ENCODE measurements at regions of chr3 and their contacts with region 1.

Region 1: DNA sequence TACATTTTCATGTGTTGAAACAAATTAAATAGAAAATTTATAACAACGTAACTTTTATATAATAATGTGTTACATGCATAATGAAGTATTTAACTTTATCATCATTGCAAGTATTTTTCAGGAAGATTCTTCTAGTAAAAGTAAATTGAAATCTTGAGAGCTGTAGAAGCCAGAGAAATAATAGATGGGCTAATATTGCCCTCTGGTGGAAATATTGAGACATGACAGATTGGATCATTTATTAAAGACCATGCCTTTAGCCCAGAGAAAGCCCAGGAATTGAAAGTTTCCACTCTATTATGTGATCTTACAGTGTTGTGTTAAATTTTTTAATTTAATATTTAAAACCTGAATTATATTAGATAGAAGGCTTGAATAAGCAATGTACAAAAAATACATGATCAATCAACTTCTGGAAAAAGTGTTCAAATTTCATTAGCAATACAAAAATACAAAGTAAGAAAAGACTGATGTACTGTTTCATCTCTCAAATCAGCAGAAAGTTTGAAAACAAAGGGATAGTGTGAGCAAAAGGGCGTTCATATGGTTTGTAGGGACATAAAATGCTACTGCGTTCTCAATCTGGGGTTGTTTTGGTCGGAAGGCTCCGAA is 52.7 kb upstream of the SPTSSB start:
- DNase-seq: peak; percentile 64
- H3K4me3 ChIP-seq: no peak overlapping the region
- H3K27ac ChIP-seq: no peak overlapping the region
- H3K4me1 ChIP-seq: no peaks in the 10 kb centered on the region
- H3K27me3 ChIP-seq: no peaks in the 10 kb centered on the region
- CTCF ChIP-seq: peak; percentile 72

Region 2: DNA sequence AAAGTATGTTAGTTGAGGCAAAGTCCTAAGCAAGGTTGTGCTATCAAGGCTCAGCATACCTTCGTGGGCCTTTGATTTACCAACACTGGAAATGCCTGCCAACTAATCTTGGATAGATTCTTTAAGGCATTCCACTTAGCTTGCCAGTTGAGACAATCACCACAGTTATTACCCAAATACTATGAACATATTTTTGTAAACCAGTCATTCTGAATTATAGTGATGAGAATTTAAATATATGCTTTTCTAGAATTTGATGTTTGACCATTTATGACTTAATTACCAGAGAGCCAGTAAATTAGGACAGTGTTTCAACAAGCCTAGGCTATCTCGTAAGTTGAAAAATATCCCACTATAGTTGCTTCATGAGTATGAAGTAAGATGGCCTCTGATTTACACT is 989.9 kb before region 1 on chr3:
- CTCF ChIA-PET with region 1: no interaction called
- POLR2A ChIA-PET with region 1: no interaction called
- intact Hi-C with region 1: loop called (anchors 10 kb)
- DNase-seq: no peak
- H3K4me3 ChIP-seq: no peak overlapping the region
- H3K27ac ChIP-seq: no peak overlapping the region
- H3K4me1 ChIP-seq: no peaks in the 10 kb centered on the region
- H3K27me3 ChIP-seq: no peaks in the 10 kb centered on the region
- CTCF ChIP-seq: no peak

Region 3: DNA sequence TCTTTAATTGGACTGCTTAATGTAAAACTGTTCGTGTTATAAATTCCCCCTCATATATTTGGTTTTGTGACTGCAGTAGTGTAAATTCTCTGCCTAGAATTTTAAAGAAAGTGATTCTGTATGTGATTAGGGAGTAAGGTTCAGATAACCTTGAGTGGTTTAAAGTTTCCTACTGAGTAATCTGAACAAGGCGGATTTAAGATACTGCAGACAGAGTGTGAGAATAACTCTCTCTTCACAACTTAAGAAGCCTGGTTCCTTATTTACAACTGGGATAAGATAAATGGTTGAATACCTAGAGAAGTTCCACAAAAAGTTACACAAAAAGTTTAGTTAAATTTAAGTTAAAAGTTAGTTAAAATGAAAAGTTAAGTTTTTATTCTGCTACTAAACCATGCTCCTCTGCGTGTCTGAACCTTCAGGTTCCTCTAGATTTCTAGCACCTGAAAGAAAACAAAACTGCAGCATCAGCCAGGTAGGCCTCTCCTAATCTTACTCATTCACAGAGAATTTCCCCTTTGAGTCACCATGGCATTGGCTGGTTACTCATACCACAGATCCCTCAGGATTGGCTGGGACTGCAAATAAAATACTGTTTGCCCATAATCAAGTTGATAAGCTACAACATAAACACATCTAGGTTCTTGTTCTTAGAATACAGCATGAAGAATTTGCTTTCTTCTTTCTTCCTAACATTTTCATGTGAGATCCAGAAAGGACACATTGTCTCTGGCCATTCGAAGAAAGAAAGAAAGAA is 747.3 kb before region 1 on chr3 and contains the start of gene ARL14:
- CTCF ChIA-PET with region 1: no interaction called
- POLR2A ChIA-PET with region 1: no interaction called
- intact Hi-C with region 1: loop called (anchors 10 kb)
- DNase-seq: no peak
- H3K4me3 ChIP-seq: no peak within 1 kb of the TSS
- H3K27ac ChIP-seq: no peak within 1 kb of the TSS
- H3K4me1 ChIP-seq: peaks cover 8% of the 10 kb centered on the region
- H3K27me3 ChIP-seq: no peaks in the 10 kb centered on the region
- CTCF ChIP-seq: no peak
- total RNA-seq, gene ARL14: not detected in 2 replicates

Region 4: GRCh38 chr3:160707187-160707794 is 716.7 kb before region 1 on chr3:
- CTCF ChIA-PET with region 1: no interaction called
- POLR2A ChIA-PET with region 1: no interaction called
- intact Hi-C with region 1: loop called (anchors 10 kb)
- DNase-seq: peak; percentile 52
- H3K4me3 ChIP-seq: no peak overlapping the region
- H3K27ac ChIP-seq: no peak overlapping the region
- H3K4me1 ChIP-seq: no peaks in the 10 kb centered on the region
- H3K27me3 ChIP-seq: peaks cover 3% of the 10 kb centered on the region
- CTCF ChIP-seq: peak; percentile 58

Region 5: GRCh38 chr3:160921020-160921635 is 502.9 kb before region 1 on chr3:
- CTCF ChIA-PET with region 1: no interaction called
- POLR2A ChIA-PET with region 1: no interaction called
- intact Hi-C with region 1: loop called (anchors 10 kb)
- DNase-seq: peak; percentile 51
- H3K4me3 ChIP-seq: no peak overlapping the region
- H3K27ac ChIP-seq: no peak overlapping the region
- H3K4me1 ChIP-seq: no peaks in the 10 kb centered on the region
- H3K27me3 ChIP-seq: no peaks in the 10 kb centered on the region
- CTCF ChIP-seq: peak; percentile 81

Measured in A673 (cell line).